ENCODE measurements at regions of chr6 and their contacts with region 1.

Region 1: DNA sequence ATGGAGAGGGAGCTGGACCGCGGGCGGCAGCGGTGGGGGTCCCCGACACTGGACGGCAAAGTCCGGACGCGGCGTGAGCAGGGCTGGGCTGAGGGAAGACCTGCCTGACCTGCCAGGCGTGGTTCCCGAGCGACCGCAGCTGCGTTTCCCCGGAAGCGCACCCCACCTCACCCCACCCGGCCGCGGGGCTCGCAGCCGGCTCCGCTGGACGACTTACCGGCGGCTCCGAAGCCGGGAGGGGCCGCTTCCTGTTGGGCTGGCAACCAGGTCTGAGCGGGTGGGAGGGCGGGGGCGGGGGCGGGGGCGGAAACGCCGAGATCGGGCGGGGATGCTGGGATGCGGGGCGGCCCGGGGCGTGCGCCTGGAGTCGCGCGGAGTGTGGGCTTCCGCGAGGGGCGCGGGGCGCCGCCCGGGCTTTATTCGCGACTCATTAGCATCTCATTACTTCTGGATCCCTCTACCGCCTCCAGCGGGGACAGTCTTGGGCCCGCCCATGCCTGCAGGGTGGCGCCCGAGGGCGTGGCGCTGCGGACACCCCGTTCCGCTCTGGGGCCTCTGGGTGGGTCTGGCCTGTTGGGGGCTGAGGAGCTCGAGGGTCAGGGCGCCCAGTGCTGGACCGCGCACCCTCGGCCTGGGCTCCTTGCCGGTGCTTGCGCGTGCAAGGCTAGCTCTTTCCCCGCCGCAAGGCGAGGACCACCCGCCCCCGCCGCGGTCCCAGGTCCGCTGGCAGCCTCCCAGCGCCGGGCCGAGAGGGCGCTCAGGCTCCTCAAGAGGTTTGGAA is at the start of gene MICAL1:
- H3K4me3 Mint-ChIP-seq: peak within 1 kb of the TSS; percentile 96
- H3K27ac Mint-ChIP-seq: peak within 1 kb of the TSS; percentile 95
- H3K4me1 Mint-ChIP-seq: peaks cover 72% of the 10 kb centered on the region
- H3K27me3 Mint-ChIP-seq: no peaks in the 10 kb centered on the region

Region 2: DNA sequence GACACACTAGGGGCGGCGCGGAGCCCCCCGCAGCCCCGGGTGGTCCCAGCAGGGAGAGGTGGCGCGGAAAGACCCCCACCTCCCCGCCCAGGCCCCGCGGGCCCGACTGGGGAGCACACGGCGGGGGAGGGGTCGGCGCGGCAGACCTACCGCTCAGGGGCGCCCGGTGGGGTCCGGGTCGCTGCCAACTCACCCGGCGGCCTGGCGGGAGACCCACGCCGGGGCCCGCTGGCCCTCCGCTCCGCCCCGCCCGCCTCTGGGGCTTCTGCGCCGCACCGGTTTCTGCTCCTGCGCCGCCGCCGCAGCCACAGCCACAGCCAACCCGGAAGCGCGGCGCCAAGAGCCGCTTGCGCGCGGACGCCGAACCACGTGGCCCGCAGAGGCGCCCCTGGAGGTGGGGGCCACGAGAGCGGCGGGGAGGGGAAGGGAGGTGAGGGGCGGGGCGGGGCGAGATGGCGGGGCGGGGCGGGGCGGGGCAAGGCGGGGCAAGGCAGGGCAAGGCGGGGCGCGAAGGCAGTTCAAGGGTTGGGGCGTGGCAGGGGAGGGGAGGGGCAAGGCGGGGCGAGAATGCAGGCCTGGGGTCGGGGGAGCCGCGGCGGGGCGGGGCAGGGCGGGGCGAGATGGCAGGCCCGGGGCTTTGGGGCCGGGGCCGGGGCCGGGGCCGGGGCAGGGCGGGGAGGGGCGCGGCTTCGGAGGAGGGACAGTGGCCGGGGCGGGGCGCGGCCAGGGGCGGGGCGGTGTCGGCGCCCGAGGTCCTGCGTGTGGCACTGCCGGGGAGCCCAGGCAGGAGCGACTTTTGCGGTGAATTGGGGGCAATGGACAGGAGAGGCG is 27.4 kb after region 1 on chr6 and contains the start of gene ZBTB24:
- intact Hi-C with region 1: loop called (anchors 2 kb)
- H3K4me3 Mint-ChIP-seq: peak within 1 kb of the TSS; percentile 81
- H3K27ac Mint-ChIP-seq: peak within 1 kb of the TSS; percentile 79
- H3K4me1 Mint-ChIP-seq: peaks cover 47% of the 10 kb centered on the region
- H3K27me3 Mint-ChIP-seq: peaks cover 10% of the 10 kb centered on the region

Region 3: GRCh38 chr6:110002676-110003075 is 547.0 kb after region 1 on chr6:
- intact Hi-C with region 1: no loop called
- H3K4me3 Mint-ChIP-seq: no peak overlapping the region
- H3K27ac Mint-ChIP-seq: no peak overlapping the region
- H3K4me1 Mint-ChIP-seq: peaks cover 5% of the 10 kb centered on the region
- H3K27me3 Mint-ChIP-seq: peaks cover 10% of the 10 kb centered on the region